Activated CD4-positive, alpha-beta T cell treated with anti-CD3 and anti-CD28 coated beads for 36 hours (primary cell): ENCODE measurements at regions of chr1 and their contacts with region 1.

Region 1: GRCh38 chr1:27071049-27071416 is 58.4 kb upstream of the TENT5B start:
- DNase-seq: no peak
- ATAC-seq: no peak
- H3K4me3 Mint-ChIP-seq: no peak overlapping the region
- H3K27ac Mint-ChIP-seq: no peak overlapping the region
- H3K4me1 Mint-ChIP-seq: no peaks in the 10 kb centered on the region
- H3K27me3 Mint-ChIP-seq: no peaks in the 10 kb centered on the region

Region 2: DNA sequence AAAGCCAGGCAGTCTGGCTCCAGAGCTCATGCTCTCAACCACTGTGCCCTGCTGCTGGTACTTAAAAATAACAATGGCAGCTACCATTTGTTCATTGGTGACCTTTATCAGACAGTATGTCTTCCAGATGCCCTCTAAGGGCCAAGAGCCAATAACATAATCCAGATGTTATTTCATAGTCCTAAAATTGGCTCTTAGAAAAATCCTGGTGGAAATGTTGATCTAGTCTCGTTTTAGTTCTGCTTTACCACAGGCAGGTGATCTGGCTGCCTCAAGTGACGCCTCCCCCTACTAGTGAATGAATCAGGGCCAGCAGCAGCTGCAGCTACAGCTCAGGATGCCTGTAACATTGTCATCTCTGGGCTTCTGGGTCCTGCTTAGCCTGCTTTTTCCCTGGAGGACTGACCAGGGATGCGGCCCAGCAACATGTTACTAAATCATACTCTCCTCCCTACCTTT is 611.4 kb before region 1 on chr1:
- CTCF ChIA-PET with region 1: no interaction called
- POLR2A ChIA-PET with region 1: interaction called, 12 read pairs
- intact Hi-C with region 1: no loop called
- DNase-seq: no peak
- ATAC-seq: no peak
- H3K4me3 Mint-ChIP-seq: no peak overlapping the region
- H3K27ac Mint-ChIP-seq: no peak overlapping the region
- H3K4me1 Mint-ChIP-seq: no peaks in the 10 kb centered on the region
- H3K27me3 Mint-ChIP-seq: no peaks in the 10 kb centered on the region

Region 3: DNA sequence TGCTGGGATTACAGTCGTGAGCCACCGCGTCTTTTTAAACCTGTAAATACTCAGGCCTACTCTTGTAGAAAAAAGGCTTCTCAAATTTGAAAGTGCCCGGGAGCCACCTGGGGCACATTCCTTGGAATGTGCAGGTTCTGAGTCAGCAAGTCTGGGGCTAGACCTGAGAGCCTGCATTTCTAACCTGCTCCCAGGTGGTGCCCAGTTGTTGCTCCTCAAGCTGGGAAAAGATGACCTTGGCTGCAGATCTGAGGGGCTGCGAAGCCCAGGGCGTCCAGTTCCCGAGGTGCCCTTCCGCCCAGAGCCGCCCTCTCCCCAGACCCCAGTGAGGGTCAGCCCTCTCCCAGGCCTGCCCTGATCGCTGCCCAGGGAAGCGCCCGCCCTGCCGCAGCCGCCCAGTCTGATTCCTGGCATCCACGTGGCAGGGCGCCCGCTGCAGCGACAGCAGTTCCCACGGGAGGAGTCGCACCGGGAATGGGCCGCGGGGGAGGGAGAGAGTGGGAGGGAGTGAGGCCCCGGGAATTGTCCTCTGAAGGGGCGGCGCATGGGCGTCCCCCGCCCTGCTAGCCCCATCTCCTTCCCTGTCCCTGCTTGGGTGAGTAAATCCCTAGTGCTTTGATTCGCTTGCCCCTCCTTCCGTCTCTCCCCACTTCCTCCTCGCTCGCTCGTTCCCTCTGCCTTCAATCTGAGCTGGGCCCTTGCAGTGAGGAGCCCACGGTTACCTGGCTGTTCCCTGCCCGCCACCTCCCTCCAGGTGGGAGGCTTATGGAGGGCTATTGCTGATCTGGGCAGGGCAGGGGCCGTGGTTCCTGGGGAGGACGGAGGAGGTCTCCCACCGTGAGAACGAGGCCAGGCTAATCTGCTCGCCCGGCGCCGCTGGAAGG is 39.6 kb before region 1 on chr1:
- CTCF ChIA-PET with region 1: no interaction called
- POLR2A ChIA-PET with region 1: no interaction called
- intact Hi-C with region 1: loop called in 1 of 2 experiments (anchors 1 kb)
- DNase-seq: no peak
- ATAC-seq: no peak
- H3K4me3 Mint-ChIP-seq: no peak overlapping the region
- H3K27ac Mint-ChIP-seq: no peak overlapping the region
- H3K4me1 Mint-ChIP-seq: no peaks in the 10 kb centered on the region
- H3K27me3 Mint-ChIP-seq: peaks cover 4% of the 10 kb centered on the region